ENCODE measurements at regions of chr17 and their contacts with region 1.

Region 1: GRCh38 chr17:15999439-16000350 is at the starts of genes TTC19 and ZSWIM7:
- DNase-seq: peak; percentile 97
- ATAC-seq: peak; percentile 88
- H3K4me3 Mint-ChIP-seq: peak within 1 kb of the TSS; percentile 90
- H3K27ac Mint-ChIP-seq: peak within 1 kb of the TSS; percentile 97
- H3K4me1 Mint-ChIP-seq: peaks cover 22% of the 10 kb centered on the region
- H3K27me3 Mint-ChIP-seq: no peaks in the 10 kb centered on the region
- total RNA-seq, gene TTC19: 21.1 to 22.0 TPM
- total RNA-seq, gene ZSWIM7: 11.2 to 11.7 TPM

Region 2: GRCh38 chr17:15257258-15257788 is 742.4 kb before region 1 on chr17:
- CTCF ChIA-PET with region 1: no interaction called
- POLR2A ChIA-PET with region 1: no interaction called
- intact Hi-C with region 1: loop called in 1 of 2 experiments (anchors 1 kb)
- DNase-seq: peak; percentile 73
- ATAC-seq: peak; percentile 62
- H3K4me3 Mint-ChIP-seq: no peak overlapping the region
- H3K27ac Mint-ChIP-seq: no peak overlapping the region
- H3K4me1 Mint-ChIP-seq: peaks cover 15% of the 10 kb centered on the region
- H3K27me3 Mint-ChIP-seq: peaks cover 59% of the 10 kb centered on the region

Region 3: DNA sequence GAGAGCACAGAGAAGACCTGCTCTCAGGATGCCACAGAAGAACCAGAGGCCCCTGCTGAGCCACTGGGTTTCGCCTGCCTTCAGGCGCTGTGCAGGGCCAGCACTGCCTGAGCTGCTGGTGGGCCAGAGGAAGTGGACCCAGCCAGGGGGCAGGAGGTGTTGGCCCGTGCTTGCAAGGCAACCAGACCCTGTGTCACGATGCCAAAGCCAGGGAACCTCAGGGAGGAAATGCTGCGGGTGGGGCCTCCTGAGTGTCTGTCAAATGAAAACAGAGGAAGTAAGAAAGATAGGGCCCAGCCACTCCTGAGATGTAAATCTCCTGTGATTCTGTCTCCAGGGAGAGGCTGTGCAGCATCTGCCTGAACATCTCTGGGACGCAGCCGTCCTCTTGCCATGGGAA is 112.9 kb before region 1 on chr17:
- CTCF ChIA-PET with region 1: no interaction called
- POLR2A ChIA-PET with region 1: no interaction called
- intact Hi-C with region 1: loop called in 1 of 2 experiments (anchors 5 kb)
- DNase-seq: no peak
- ATAC-seq: no peak
- H3K4me3 Mint-ChIP-seq: no peak overlapping the region
- H3K27ac Mint-ChIP-seq: no peak overlapping the region
- H3K4me1 Mint-ChIP-seq: peaks cover 17% of the 10 kb centered on the region
- H3K27me3 Mint-ChIP-seq: no peaks in the 10 kb centered on the region

Region 4: GRCh38 chr17:15944759-15945529 is 54.8 kb before region 1 on chr17 and contains the start of gene ADORA2B:
- CTCF ChIA-PET with region 1: interaction called, 12 read pairs
- POLR2A ChIA-PET with region 1: no interaction called
- intact Hi-C with region 1: loop called (anchors 1 to 2 kb)
- DNase-seq: peak; percentile 77
- ATAC-seq: peak; percentile 80
- H3K4me3 Mint-ChIP-seq: peak within 1 kb of the TSS; percentile 72
- H3K27ac Mint-ChIP-seq: peak within 1 kb of the TSS; percentile 52
- H3K4me1 Mint-ChIP-seq: peaks cover 13% of the 10 kb centered on the region
- H3K27me3 Mint-ChIP-seq: peaks cover 42% of the 10 kb centered on the region
- total RNA-seq, gene ADORA2B: 1.9 to 2.2 TPM

Region 5: GRCh38 chr17:15954222-15954621 is 45.5 kb before region 1 on chr17:
- CTCF ChIA-PET with region 1: interaction called, 4 read pairs
- POLR2A ChIA-PET with region 1: no interaction called
- intact Hi-C with region 1: loop called (anchors 1 kb)
- DNase-seq: no peak
- ATAC-seq: no peak
- H3K4me3 Mint-ChIP-seq: no peak overlapping the region
- H3K27ac Mint-ChIP-seq: no peak overlapping the region
- H3K4me1 Mint-ChIP-seq: peaks cover 23% of the 10 kb centered on the region
- H3K27me3 Mint-ChIP-seq: peaks cover 25% of the 10 kb centered on the region

Region 6: DNA sequence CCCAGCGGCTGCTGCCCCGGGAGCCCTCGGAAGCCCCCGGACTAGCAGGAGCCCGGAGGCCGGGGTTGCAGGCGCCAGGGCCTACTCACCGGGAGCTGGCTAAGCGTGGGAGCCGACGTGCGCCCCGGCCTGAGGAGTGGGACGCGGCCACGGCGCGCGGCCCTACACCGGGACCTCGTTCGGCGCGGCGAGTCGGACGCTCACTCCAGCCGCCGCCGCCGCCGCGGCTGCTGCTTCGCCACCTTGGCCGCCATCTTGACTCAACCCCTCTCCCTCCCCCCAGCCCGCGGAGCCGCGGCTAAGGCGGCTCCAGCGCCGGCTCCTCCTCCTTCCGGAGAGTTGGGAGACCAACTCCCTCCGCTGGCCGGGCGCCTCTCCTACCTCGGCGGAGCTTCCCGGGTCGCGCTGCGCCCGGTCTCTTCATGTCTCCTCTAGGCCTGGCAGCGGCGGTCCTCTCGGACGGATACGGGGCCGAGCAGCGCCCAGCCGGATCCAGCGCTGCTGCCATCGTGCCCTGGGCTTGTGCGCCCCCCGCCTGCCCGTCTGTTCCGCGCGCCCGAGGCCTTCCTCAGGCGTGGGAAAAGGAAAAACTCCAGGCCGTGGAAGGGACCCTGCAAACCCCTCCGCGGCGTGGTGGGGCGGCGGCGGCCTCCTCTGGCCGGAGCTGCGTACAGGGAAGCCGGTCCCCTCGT is 215.7 kb after region 1 on chr17 and contains the start of gene NCOR1:
- CTCF ChIA-PET with region 1: no interaction called
- POLR2A ChIA-PET with region 1: no interaction called
- intact Hi-C with region 1: loop called in 1 of 2 experiments (anchors 1 kb)
- DNase-seq: peak; percentile 96
- ATAC-seq: peak; percentile 87
- H3K4me3 Mint-ChIP-seq: peak within 1 kb of the TSS; percentile 93
- H3K27ac Mint-ChIP-seq: peak within 1 kb of the TSS; percentile 81
- H3K4me1 Mint-ChIP-seq: peaks cover 42% of the 10 kb centered on the region
- H3K27me3 Mint-ChIP-seq: no peaks in the 10 kb centered on the region
- total RNA-seq, gene NCOR1: 110 to 155 TPM